Upper lobe of right lung (tissue), 1 donor: ENCODE measurements at regions of chr10 and their contacts with region 1.

Region 1: DNA sequence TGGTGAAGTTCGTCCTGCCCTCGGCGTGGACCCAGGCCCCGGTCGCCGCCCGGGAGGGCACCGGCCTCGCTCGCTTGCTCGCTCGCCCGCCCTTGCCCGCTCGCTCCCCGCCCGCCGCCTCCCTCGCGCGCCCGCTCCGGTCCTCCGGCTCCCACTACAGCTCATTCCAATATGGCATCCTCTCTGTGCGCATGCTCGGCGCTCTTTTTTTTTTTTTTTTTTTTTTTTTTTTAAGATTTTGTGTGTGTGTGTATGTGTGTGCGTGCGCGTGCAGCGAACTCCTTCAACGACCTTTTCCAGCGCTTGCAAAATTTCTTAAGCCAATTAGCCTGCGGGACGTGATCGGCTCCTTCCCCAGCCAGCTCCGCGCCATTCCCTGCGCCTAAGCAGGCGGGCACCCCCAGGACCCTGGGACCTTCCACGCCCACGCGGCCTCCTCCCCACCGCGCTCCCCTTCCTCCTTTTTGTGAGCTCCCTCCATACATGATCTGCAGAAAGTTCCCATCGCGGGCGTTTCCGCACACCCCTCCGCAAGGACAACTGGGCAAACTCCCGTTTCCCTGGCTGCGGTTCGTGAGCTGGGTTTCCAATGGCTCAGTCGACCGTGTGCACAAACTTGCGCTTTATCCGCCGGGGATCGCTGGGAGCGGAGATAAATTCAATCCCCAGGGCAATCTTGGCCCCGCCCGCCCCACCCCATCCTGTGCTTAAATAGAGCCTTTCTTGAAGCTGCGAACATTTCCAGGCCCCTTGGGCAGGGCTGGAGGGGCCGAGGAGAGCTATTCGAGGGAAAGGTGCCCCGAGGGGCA is at the start of gene SFMBT2:
- DNase-seq: peak; percentile 83
- ATAC-seq: peak; percentile 56
- H3K4me3 ChIP-seq: peak within 1 kb of the TSS; percentile 69
- H3K27ac ChIP-seq: peak within 1 kb of the TSS; percentile 65
- H3K4me1 ChIP-seq: peaks cover 37% of the 10 kb centered on the region
- H3K27me3 ChIP-seq: peaks cover 21% of the 10 kb centered on the region
- CTCF ChIP-seq: peak; percentile 19
- total RNA-seq, gene SFMBT2: 16.1 TPM

Region 2: DNA sequence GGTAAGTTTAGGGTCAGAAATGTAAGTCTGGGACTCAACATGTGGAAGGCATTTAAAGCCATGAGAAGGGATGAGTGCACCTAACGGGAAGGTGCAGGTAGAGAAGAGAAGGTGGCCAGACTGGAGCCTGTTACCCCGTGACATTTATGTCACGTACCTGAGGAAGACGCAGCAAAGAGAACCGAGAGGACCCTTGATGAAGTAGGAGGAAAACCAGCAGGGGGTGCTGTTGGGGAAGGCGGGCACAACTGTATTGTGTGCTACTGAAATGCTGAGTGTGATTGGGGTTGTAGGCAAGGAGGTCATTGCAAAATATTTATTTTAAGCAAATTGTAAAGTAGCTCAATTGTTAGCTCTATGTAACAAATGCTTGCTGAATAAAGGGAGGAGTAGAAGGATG is 492.8 kb before region 1 on chr10:
- intact Hi-C with region 1: loop called (anchors 10 kb)
- DNase-seq: peak; percentile 73
- ATAC-seq: peak; percentile 75
- H3K4me3 ChIP-seq: no peak overlapping the region
- H3K27ac ChIP-seq: no peak overlapping the region
- H3K4me1 ChIP-seq: peaks cover 4% of the 10 kb centered on the region
- H3K27me3 ChIP-seq: no peaks in the 10 kb centered on the region
- CTCF ChIP-seq: peak; percentile 52

Region 3: DNA sequence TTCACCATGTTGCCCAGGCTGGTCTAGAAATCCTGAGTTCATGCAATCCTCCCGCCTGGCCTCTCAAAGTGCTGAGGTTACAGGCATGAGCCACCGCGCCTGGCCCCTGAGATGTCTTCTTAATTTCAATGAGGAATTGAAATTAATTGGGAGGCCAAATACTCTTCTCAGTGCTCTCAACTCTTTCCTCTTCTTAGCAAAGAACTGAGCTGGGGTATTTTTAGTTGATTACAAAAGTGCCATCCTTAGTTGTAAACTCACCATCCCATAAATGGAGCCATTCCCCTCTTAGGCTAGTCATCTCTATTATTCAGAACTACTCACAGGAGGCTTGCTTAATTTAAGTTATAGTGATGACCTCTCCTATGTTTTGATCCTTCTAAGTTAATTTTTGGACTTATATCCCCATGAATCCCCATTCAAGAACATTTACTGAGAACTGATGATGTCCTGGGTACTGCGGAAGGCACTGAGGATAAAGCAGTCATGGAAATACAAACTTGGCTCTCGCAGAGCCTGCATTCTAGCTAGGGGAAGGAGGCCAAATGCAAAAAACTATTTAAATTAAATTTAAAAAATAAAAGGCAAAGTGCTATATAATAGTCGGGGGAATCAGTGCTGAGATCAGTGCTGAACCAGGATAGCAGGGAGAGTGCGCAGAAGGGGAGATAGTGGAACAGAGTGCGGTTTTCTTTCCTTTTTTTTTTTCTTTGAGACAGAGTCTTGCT is 145.5 kb before region 1 on chr10:
- intact Hi-C with region 1: loop called (anchors 5 kb)
- DNase-seq: no peak
- ATAC-seq: no peak
- H3K4me3 ChIP-seq: no peak overlapping the region
- H3K27ac ChIP-seq: no peak overlapping the region
- H3K4me1 ChIP-seq: peaks cover 4% of the 10 kb centered on the region
- H3K27me3 ChIP-seq: no peaks in the 10 kb centered on the region
- CTCF ChIP-seq: no peak

Region 4: DNA sequence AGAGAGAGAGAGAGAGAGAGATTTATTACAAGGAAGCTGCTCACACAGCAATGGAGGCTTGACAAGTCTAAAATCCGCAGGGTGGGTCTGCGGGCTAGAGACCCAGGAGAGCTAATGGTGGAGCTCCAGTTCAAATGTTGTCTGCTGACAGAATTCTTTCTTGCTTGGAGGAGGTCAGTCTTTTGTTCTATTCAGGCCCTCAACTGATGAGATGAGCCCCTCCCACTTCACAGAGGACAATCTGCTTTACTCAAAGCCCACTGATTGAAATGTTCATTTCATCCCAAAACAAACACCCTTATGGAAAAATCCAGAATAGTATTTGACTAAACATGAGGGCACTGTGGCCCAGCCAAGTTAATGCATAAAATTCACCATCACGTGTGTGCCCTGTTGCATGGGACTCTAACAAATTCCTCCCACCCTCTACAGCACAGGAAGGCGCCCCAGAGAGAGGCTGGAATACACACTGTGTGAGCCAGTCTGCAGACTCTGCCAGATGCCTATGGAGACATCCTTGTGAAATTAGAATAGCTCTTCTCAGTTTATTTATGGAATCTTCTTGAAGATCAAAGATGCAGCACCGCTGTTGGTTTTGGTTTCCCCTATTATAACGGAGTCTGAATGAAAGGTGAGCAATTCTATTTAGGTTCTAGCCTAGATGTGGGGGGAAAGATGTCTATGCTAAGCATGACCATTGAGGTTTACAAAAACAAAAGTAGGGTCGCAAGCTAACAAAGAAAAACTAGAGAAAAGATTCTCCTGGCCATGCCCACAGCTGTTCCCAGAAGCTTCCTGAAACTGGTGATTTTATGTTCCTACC is 122.8 kb after region 1 on chr10:
- intact Hi-C with region 1: no loop called
- DNase-seq: no peak
- ATAC-seq: no peak
- H3K4me3 ChIP-seq: no peak overlapping the region
- H3K27ac ChIP-seq: no peak overlapping the region
- H3K4me1 ChIP-seq: no peaks in the 10 kb centered on the region
- H3K27me3 ChIP-seq: no peaks in the 10 kb centered on the region
- CTCF ChIP-seq: no peak